Activated naive CD4-positive, alpha-beta T cell treated with anti-CD3 and anti-CD28 coated beads for 36 hours (primary cell): ENCODE measurements at regions of chr12 and their contacts with region 1.

Region 1: GRCh38 chr12:15220994-15221885 is at the start of gene RERG:
- DNase-seq: peak; percentile 76
- H3K4me3 Mint-ChIP-seq: peak within 1 kb of the TSS; percentile 62
- H3K27ac Mint-ChIP-seq: no peak within 1 kb of the TSS
- H3K4me1 Mint-ChIP-seq: peaks cover 3% of the 10 kb centered on the region
- H3K27me3 Mint-ChIP-seq: peaks cover 13% of the 10 kb centered on the region
- total RNA-seq, gene RERG: not detected

Region 2: GRCh38 chr12:14629832-14630710 is 591.2 kb before region 1 on chr12:
- CTCF ChIA-PET with region 1: no interaction called
- intact Hi-C with region 1: loop called (anchors 2 kb)
- DNase-seq: peak; percentile 79
- H3K4me3 Mint-ChIP-seq: no peak overlapping the region
- H3K27ac Mint-ChIP-seq: no peak overlapping the region
- H3K4me1 Mint-ChIP-seq: no peaks in the 10 kb centered on the region
- H3K27me3 Mint-ChIP-seq: no peaks in the 10 kb centered on the region

Region 3: GRCh38 chr12:14774906-14775762 is 446.1 kb before region 1 on chr12:
- CTCF ChIA-PET with region 1: interaction called, 3 read pairs
- intact Hi-C with region 1: loop called (anchors 5 kb)
- DNase-seq: peak; percentile 58
- H3K4me3 Mint-ChIP-seq: peak overlapping the region; percentile 95
- H3K27ac Mint-ChIP-seq: peak overlapping the region; percentile 94
- H3K4me1 Mint-ChIP-seq: peaks cover 36% of the 10 kb centered on the region
- H3K27me3 Mint-ChIP-seq: no peaks in the 10 kb centered on the region

Region 4: GRCh38 chr12:14937689-14938088 is 283.6 kb before region 1 on chr12:
- CTCF ChIA-PET with region 1: no interaction called
- intact Hi-C with region 1: loop called (anchors 5 kb)
- DNase-seq: peak; percentile 41
- H3K4me3 Mint-ChIP-seq: no peak overlapping the region
- H3K27ac Mint-ChIP-seq: no peak overlapping the region
- H3K4me1 Mint-ChIP-seq: peaks cover 43% of the 10 kb centered on the region
- H3K27me3 Mint-ChIP-seq: no peaks in the 10 kb centered on the region

Region 5: DNA sequence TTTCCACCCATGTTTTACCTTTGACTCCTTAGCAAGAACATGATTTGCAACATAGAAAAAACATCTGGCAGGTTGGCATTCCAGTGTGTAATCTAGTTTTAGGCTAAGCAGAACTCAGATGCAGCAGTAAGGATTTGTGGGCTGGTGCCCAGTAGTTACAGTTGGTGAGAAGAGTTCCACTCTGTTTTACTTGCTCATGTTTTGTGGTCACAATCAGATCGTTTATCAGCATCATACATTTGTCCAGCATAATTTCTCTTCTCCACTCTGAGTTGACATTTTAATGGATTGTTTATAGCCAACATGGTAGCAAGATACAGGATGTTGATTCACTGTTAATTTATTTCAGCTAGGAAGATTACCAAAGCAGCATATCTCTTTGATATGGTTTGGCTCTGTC is 128.4 kb before region 1 on chr12:
- CTCF ChIA-PET with region 1: no interaction called
- intact Hi-C with region 1: no loop called
- DNase-seq: no peak
- H3K4me3 Mint-ChIP-seq: no peak overlapping the region
- H3K27ac Mint-ChIP-seq: no peak overlapping the region
- H3K4me1 Mint-ChIP-seq: no peaks in the 10 kb centered on the region
- H3K27me3 Mint-ChIP-seq: no peaks in the 10 kb centered on the region

Region 6: GRCh38 chr12:15193946-15194345 is 27.3 kb before region 1 on chr12:
- CTCF ChIA-PET with region 1: interaction called, 12 read pairs
- intact Hi-C with region 1: no loop called
- DNase-seq: no peak
- H3K4me3 Mint-ChIP-seq: no peak overlapping the region
- H3K27ac Mint-ChIP-seq: no peak overlapping the region
- H3K4me1 Mint-ChIP-seq: no peaks in the 10 kb centered on the region
- H3K27me3 Mint-ChIP-seq: peaks cover 10% of the 10 kb centered on the region

Region 7: DNA sequence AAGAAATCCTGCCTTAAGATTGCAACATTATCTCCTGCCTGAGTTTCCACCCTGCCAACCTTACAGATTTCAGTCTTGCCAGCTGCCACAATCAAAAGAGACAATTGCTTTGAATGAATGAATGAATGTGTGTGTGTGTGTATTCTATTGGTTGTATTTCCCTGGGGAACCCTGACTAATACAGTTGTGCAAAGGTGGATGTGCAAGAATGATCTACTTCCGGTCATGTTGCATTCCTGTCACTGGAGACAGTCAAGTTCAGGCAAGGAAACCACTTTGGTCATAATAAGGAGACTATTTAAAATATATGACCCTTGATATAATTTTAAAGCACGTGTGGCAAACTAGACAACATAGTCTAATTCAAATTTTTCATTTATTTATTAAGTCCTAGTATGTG is 13.1 kb before region 1 on chr12:
- CTCF ChIA-PET with region 1: interaction called, 18 read pairs
- intact Hi-C with region 1: no loop called
- DNase-seq: no peak
- H3K4me3 Mint-ChIP-seq: no peak overlapping the region
- H3K27ac Mint-ChIP-seq: no peak overlapping the region
- H3K4me1 Mint-ChIP-seq: no peaks in the 10 kb centered on the region
- H3K27me3 Mint-ChIP-seq: peaks cover 11% of the 10 kb centered on the region

Region 8: DNA sequence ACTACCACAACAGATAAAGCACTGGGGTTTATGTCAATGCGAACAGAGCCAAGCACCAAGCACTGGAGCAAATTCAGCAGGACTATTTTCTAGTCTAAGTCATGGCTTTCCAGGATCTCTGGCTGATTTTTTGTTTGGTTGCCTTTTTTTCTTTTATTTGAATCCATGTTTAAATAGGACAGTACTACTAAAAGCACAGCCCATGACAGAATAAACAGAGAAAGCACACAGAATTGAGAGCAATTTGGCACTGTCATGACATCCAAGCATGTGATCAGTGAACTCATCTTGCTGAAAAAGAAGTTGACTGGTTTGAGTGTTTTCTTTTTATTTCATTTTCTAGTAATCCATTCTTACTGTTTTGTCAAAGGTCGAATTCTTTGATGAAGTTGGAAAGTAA is 23.1 kb after region 1 on chr12:
- CTCF ChIA-PET with region 1: no interaction called
- intact Hi-C with region 1: no loop called
- DNase-seq: no peak
- H3K4me3 Mint-ChIP-seq: no peak overlapping the region
- H3K27ac Mint-ChIP-seq: no peak overlapping the region
- H3K4me1 Mint-ChIP-seq: no peaks in the 10 kb centered on the region
- H3K27me3 Mint-ChIP-seq: peaks cover 59% of the 10 kb centered on the region

Region 9: GRCh38 chr12:15808652-15809051 is 587.4 kb after region 1 on chr12:
- CTCF ChIA-PET with region 1: no interaction called
- intact Hi-C with region 1: no loop called
- DNase-seq: no peak
- H3K4me3 Mint-ChIP-seq: no peak overlapping the region
- H3K27ac Mint-ChIP-seq: no peak overlapping the region
- H3K4me1 Mint-ChIP-seq: no peaks in the 10 kb centered on the region
- H3K27me3 Mint-ChIP-seq: peaks cover 8% of the 10 kb centered on the region